CD14-positive monocyte (primary cell): ENCODE measurements at regions of chr17 and their contacts with region 1.

Region 1: DNA sequence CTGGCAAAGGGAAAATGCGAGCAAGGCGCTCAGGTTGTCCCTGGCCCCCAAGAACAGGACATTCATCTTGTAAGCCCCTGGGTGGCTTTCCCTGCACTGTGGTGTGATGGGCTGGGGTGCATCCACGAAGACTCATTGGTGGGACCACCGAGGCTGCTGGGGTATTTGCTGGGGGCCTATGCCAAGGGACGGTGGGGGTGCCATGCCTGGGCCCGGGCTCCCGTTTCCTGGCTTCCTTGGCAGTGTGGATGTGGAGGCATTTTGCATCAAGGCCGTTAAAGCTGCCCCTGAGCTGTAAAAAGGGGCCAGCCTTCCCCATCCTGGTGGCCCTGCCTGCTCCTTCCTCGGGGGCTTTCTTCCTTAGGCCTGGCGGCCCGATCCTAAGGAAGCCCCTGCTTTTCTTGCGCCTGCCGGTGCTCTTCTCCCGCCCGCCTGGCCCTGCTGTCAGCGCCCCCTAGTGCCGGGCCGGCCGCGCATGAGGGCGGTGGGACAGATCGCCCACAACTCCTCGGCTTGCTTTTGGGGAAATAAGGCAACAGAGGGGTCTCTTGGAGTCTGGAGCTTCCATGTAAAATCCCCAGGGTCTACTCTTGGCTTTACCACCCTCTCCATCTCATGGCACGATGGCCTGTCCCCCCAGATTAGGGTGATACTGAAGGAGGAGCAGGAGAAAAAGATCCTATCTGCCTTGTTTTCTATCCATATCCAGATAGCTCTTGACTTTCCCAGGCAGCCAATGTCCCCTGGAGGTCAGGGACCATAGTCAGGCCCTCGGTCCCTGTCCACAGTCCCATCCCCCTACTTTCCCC is 9.8 kb upstream of the TBX2 start:
- DNase-seq: peak in 2 of 3 donors; percentile 27 to 43
- H3K4me3 ChIP-seq: no peak overlapping the region
- H3K4me3 Mint-ChIP-seq: no peak overlapping the region
- H3K27ac ChIP-seq: no peak overlapping the region
- H3K27ac Mint-ChIP-seq: no peak overlapping the region
- H3K4me1 ChIP-seq: no peaks in the 10 kb centered on the region
- H3K4me1 Mint-ChIP-seq: peaks cover 3% of the 10 kb centered on the region
- H3K27me3 ChIP-seq: peaks cover under 1 to 12% of the 10 kb centered on the region in 2 donors
- H3K27me3 Mint-ChIP-seq: peaks cover 21 to 45% (median 24%) of the 10 kb centered on the region in 3 donors
- CTCF ChIP-seq: peak; percentile 97

Region 2: DNA sequence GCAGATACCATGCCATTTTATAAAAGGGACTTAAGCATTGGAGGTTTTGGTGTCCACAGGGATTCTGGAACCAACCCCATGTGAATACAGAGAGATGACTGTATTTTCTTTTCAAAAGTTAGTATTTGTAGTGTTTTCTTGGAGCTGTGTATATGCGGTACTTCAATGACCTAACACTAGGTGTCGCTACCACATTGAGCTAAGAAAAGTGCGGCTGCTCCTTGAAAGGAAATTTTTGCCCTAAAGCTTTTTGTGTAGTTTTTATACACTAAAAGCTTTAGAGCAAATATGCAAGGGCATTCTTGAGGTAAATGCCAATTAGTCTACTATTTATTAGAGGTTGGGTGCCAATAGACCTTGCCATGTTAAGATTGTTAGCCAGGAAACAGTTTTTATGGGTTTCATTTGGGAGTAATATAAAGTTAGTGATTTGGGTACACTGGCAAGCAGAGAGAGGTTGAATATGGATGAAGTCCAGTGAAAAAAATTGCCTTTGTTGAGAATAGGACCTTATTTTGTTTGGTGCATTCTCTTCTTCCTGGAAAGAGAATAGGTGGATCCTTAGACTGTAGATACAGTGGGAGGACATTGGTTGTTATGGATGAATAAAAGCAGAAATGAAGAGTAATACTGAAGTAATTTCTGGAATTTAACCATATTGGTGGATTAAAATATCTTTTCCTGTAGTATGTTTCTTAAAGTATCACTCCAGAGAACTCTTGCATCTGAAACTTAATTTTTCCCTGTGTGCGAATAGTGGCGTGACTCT is 668.9 kb before region 1 on chr17:
- intact Hi-C with region 1: loop called (anchors 5 to 10 kb)
- DNase-seq: peak; percentile 25 to 39 (median 33)
- H3K4me3 ChIP-seq: no peak overlapping the region
- H3K4me3 Mint-ChIP-seq: no peak overlapping the region
- H3K27ac ChIP-seq: no peak overlapping the region
- H3K27ac Mint-ChIP-seq: no peak overlapping the region
- H3K4me1 ChIP-seq: no peaks in the 10 kb centered on the region
- H3K4me1 Mint-ChIP-seq: no peaks in the 10 kb centered on the region
- H3K27me3 ChIP-seq: no peaks in the 10 kb centered on the region
- H3K27me3 Mint-ChIP-seq: no peaks in the 10 kb centered on the region
- CTCF ChIP-seq: peak; percentile 94

Region 3: GRCh38 chr17:61002316-61002736 is 387.5 kb before region 1 on chr17:
- intact Hi-C with region 1: loop called (anchors 5 to 10 kb)
- DNase-seq: peak; percentile 1 to 24 (median 7)
- H3K4me3 ChIP-seq: no peak overlapping the region
- H3K4me3 Mint-ChIP-seq: no peak overlapping the region
- H3K27ac ChIP-seq: no peak overlapping the region
- H3K27ac Mint-ChIP-seq: no peak overlapping the region
- H3K4me1 ChIP-seq: no peaks in the 10 kb centered on the region
- H3K4me1 Mint-ChIP-seq: no peaks in the 10 kb centered on the region
- H3K27me3 ChIP-seq: no peaks in the 10 kb centered on the region
- H3K27me3 Mint-ChIP-seq: peaks cover 0 to 5% (median 2%) of the 10 kb centered on the region in 3 donors
- CTCF ChIP-seq: peak; percentile 70